ENCODE measurements at regions of chr1 and their contacts with region 1.

Region 1: GRCh38 chr1:40449684-40450494 is at the start of gene ZFP69B:
- DNase-seq: peak; percentile 81 to 86 (median 82)
- H3K4me3 ChIP-seq: peak within 1 kb of the TSS; percentile 75 to 82
- H3K4me3 Mint-ChIP-seq: peak within 1 kb of the TSS; percentile 86 to 96 (median 93)
- H3K27ac ChIP-seq: peak within 1 kb of the TSS; percentile 55
- H3K27ac Mint-ChIP-seq: peak within 1 kb of the TSS; percentile 76 to 95 (median 89)
- H3K4me1 ChIP-seq: peaks cover 18% of the 10 kb centered on the region
- H3K4me1 Mint-ChIP-seq: peaks cover 18 to 25% (median 21%) of the 10 kb centered on the region in 4 donors
- H3K27me3 ChIP-seq: no peaks in the 10 kb centered on the region
- H3K27me3 Mint-ChIP-seq: no peaks in the 10 kb centered on the region
- total RNA-seq, gene ZFP69B: 7.5 to 7.9 TPM

Region 2: GRCh38 chr1:40476924-40477677 is 27.2 kb after region 1 on chr1 and contains the start of gene ZFP69:
- CTCF ChIA-PET with region 1: interaction called, 3 read pairs
- POLR2A ChIA-PET with region 1: interaction called, 20 read pairs
- intact Hi-C with region 1: no loop called
- DNase-seq: peak; percentile 60 to 72 (median 67)
- H3K4me3 ChIP-seq: peak within 1 kb of the TSS; percentile 61 to 70
- H3K4me3 Mint-ChIP-seq: peak within 1 kb of the TSS; percentile 88 to 97 (median 93)
- H3K27ac ChIP-seq: peak within 1 kb of the TSS; percentile 52
- H3K27ac Mint-ChIP-seq: peak within 1 kb of the TSS; percentile 85 to 91 (median 88)
- H3K4me1 ChIP-seq: peaks cover 13% of the 10 kb centered on the region
- H3K4me1 Mint-ChIP-seq: peaks cover 16 to 26% (median 22%) of the 10 kb centered on the region in 4 donors
- H3K27me3 ChIP-seq: no peaks in the 10 kb centered on the region
- H3K27me3 Mint-ChIP-seq: no peaks in the 10 kb centered on the region
- total RNA-seq, gene ZFP69: 3.3 to 4.3 TPM

Region 3: GRCh38 chr1:40531381-40532061 is 81.6 kb after region 1 on chr1 and contains the start of gene ZNF684:
- CTCF ChIA-PET with region 1: interaction called, 7 read pairs
- POLR2A ChIA-PET with region 1: interaction called, 4 read pairs
- intact Hi-C with region 1: loop called (anchors 2 kb)
- DNase-seq: peak; percentile 82 to 92 (median 84)
- H3K4me3 ChIP-seq: peak within 1 kb of the TSS; percentile 19 to 90
- H3K4me3 Mint-ChIP-seq: peak within 1 kb of the TSS; percentile 94 to 100 (median 98)
- H3K27ac ChIP-seq: peak within 1 kb of the TSS; percentile 65
- H3K27ac Mint-ChIP-seq: peak within 1 kb of the TSS; percentile 84 to 100 (median 96)
- H3K4me1 ChIP-seq: peaks cover 21% of the 10 kb centered on the region
- H3K4me1 Mint-ChIP-seq: peaks cover 20 to 26% (median 23%) of the 10 kb centered on the region in 4 donors
- H3K27me3 ChIP-seq: no peaks in the 10 kb centered on the region
- H3K27me3 Mint-ChIP-seq: peaks cover 5 to 6% of the 10 kb centered on the region in 2 donors
- total RNA-seq, gene ZNF684: 4.4 to 5.5 TPM

Measured in CD4-positive, alpha-beta memory T cell (primary cell).